ENCODE measurements at regions of chr2 and their contacts with region 1.

Region 1: DNA sequence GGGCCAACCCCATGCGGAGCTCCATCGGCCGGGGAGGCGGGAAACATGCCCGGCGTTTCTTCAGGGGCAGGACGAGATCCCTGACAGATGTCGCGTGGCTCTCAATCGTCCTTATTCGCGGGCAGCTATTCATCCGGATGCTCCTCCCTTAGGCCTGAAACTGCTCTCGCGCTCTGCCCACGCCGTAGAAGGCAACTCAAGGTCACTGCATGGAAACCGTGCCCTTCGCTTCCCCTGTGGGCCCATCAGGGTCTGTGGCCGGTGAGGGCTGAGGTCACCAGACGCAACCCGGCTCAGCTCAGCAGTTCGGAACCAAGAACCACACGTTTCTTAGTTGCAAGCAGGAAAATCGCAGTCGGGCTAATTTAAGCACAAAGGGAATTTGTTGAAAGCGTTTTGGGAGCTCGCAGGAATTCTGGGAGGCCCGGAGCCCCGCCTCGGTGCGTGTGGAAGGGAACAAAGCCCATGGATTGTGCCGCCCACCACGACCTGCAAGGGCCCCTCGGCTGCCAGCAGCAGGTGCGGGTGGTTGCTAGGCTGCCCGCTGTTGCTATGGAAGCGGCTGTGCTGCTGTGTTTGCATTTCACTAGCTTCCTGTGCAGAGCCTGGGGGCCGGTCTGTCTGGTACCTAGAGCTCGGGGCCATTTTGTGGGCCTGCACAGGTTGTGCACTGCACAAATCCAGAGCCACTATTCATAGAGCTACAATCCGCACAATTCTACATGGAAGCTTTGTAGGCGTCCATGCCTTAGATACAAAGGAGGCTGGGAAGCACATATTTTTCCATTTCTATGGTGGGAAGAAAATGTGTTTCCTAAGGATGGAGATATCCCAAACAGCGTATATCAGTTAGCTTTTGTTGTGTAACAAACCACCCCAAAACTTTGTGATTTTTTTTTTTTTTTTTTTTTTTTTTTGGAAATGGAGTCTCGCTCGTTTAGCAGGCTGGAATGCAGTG is 6.0 kb upstream of the ALLC start:
- DNase-seq: peak; percentile 49
- ATAC-seq: peak; percentile 70
- H3K4me3 Mint-ChIP-seq: peak overlapping the region; percentile 81
- H3K27ac Mint-ChIP-seq: peak overlapping the region; percentile 78
- H3K4me1 Mint-ChIP-seq: peaks cover 18% of the 10 kb centered on the region
- H3K27me3 Mint-ChIP-seq: peaks cover 3% of the 10 kb centered on the region
- CTCF ChIP-seq: no peak

Region 2: GRCh38 chr2:1886405-1886992 is 1765.5 kb before region 1 on chr2:
- CTCF ChIA-PET with region 1: interaction called, 3 read pairs
- POLR2A ChIA-PET with region 1: no interaction called
- intact Hi-C with region 1: loop called (anchors 1 kb)
- DNase-seq: no peak
- ATAC-seq: no peak
- H3K4me3 Mint-ChIP-seq: no peak overlapping the region
- H3K27ac Mint-ChIP-seq: no peak overlapping the region
- H3K4me1 Mint-ChIP-seq: peaks cover 2% of the 10 kb centered on the region
- H3K27me3 Mint-ChIP-seq: peaks cover 3% of the 10 kb centered on the region
- CTCF ChIP-seq: no peak

Region 3: DNA sequence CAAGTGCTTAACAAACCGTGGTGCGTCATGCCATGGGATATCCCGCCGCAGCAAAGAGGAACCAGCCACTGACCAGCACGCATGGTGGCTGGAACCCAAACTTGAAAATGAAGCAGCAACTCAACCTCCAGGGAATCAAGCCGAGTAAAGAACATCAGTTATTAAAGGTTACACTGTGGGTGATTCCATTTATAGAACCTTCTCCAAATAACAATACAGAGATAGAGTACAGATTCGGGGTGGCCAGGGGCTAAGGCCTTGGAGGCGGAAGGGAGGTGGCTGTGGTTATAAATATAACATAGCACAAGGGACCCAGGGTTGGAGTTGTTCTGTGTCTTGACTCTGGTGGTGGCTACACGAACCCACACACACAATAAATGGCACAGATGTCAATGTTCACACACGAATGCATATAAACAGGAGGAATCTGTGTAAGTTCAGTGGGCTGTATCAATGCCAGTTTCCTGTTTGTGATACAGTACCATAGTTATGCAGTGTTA is 397.5 kb before region 1 on chr2:
- CTCF ChIA-PET with region 1: no interaction called
- POLR2A ChIA-PET with region 1: no interaction called
- intact Hi-C with region 1: loop called (anchors 5 kb)
- DNase-seq: peak; percentile 41
- ATAC-seq: peak; percentile 80
- H3K4me3 Mint-ChIP-seq: peak overlapping the region; percentile 68
- H3K27ac Mint-ChIP-seq: peak overlapping the region; percentile 89
- H3K4me1 Mint-ChIP-seq: peaks cover 63% of the 10 kb centered on the region
- H3K27me3 Mint-ChIP-seq: no peaks in the 10 kb centered on the region
- CTCF ChIP-seq: no peak

Region 4: GRCh38 chr2:3379647-3380534 is 272.1 kb before region 1 on chr2 and contains the start of gene TRAPPC12:
- CTCF ChIA-PET with region 1: no interaction called
- POLR2A ChIA-PET with region 1: interaction called, 5 read pairs
- intact Hi-C with region 1: loop called (anchors 1 kb)
- DNase-seq: peak; percentile 94
- ATAC-seq: peak; percentile 76
- H3K4me3 Mint-ChIP-seq: peak within 1 kb of the TSS; percentile 96
- H3K27ac Mint-ChIP-seq: peak within 1 kb of the TSS; percentile 94
- H3K4me1 Mint-ChIP-seq: peaks cover 52% of the 10 kb centered on the region
- H3K27me3 Mint-ChIP-seq: no peaks in the 10 kb centered on the region
- CTCF ChIP-seq: no peak
- total RNA-seq, gene TRAPPC12: 95.4 and 104 TPM in 2 replicates

Region 5: DNA sequence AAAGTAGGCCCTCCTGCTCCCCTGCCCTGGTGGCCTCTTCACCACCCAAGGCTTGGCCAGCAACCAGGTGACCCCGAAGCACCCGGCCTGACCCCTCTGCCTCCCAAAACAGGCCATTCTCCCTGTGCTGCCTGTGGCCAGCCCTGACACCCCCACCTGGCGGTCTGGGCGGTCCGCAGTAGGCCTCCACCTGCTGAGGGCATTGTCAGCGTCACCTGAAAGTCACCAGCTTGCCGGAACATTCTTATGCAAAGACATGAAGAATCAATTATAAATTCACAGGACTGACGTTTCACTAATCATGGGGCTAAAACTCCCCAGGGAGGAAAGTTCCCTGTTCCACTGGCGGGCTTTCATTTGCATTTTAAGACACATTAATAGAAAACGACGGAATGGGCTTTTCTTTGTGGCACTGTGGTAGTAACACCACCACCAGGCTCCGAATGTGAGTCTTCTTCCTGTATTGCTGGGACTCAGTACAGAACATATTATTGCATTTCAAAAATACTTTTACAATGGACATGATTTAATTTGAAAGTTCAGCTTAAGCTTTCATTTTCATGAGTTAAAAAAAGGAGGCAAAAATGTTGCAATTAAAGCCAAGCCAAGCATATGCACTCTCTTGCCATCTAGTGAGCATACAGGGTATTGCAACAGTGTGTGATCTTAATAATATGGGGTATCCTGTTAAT is 190.0 kb before region 1 on chr2:
- CTCF ChIA-PET with region 1: no interaction called
- POLR2A ChIA-PET with region 1: no interaction called
- intact Hi-C with region 1: loop called (anchors 1 kb)
- DNase-seq: no peak
- ATAC-seq: peak; percentile 80
- H3K4me3 Mint-ChIP-seq: peak overlapping the region; percentile 70
- H3K27ac Mint-ChIP-seq: peak overlapping the region; percentile 90
- H3K4me1 Mint-ChIP-seq: peaks cover 13% of the 10 kb centered on the region
- H3K27me3 Mint-ChIP-seq: no peaks in the 10 kb centered on the region
- CTCF ChIP-seq: peak; percentile 93

Region 6: DNA sequence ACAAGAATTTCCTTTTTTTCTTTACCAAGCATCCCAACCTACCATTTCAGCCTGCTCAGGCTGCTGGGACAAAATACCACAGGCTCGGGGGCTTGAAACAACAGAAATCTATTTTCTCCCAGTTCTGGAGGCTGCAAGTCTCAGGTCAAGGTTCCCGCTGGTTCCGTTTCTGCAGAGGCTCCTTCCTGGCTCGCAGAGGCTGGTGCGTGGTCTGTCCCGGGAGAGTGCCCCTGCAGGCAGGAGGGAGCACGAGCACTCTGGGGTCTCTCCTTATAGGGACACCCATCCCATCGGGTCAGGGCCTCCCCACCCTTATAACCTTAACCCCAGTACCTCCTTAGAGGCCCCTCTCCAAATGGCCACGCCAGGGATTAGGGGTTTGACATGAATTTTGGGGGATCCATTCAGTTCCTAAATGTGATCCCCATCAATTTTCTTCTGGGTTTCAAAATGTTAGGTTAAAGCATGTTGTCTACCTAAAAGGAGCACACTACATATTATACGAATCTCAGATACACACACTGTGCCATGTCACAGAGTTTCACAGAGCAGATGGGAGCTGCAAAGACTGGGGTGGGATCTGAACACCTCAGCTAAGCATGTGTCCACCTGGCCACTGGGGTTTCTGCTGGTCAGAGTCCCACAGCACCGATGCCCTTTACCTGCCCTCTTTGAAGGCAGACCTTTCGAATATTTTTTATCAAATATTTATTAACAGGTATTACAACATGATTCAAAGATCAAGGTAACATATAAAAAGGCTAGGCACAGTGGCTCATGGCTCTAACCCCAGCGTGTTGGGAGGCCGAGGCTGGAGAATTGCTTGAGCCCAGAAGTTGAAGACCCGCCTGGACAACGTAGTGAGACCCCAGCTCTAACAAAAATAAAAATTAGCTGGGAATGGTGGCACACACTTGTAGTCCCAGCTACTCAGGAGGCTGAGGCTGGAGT is 115.0 kb before region 1 on chr2:
- CTCF ChIA-PET with region 1: no interaction called
- POLR2A ChIA-PET with region 1: no interaction called
- intact Hi-C with region 1: loop called (anchors 1 kb)
- DNase-seq: no peak
- ATAC-seq: no peak
- H3K4me3 Mint-ChIP-seq: peak overlapping the region; percentile 70
- H3K27ac Mint-ChIP-seq: peak overlapping the region; percentile 46
- H3K4me1 Mint-ChIP-seq: peaks cover 11% of the 10 kb centered on the region
- H3K27me3 Mint-ChIP-seq: no peaks in the 10 kb centered on the region
- CTCF ChIP-seq: no peak

Region 7: DNA sequence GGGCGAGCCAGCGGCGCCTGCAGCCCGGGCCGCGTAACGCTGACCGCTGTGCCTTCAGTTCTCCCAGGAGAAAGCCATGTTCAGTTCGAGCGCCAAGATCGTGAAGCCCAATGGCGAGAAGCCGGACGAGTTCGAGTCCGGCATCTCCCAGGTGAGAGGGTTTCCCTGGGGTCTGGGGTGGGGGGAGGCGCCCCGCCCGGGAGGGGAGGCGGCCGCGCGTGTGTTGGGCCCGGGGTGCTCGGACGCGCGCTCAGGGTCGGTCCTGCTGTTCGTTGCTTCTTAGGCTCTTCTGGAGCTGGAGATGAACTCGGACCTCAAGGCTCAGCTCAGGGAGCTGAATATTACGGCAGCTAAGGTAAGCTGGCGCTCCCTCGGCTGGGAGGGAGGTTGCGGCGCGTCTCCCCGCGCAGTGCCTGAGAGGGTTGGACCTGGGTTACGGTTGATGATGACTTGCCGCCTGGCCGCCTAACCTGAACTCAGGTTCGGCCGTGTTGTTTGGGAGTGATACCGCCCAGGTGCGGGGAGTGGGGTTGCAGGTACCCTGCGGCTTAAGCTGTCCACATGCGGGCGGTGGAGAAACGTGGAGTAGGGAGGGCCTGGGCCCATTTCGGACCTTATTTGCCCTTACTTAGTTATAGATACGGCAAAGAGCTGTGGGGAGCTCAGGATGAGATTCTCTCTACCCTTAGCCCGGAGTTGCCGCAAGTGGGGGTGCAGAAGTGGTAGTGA is 76.3 kb before region 1 on chr2:
- CTCF ChIA-PET with region 1: no interaction called
- POLR2A ChIA-PET with region 1: interaction called, 3 read pairs
- intact Hi-C with region 1: loop called (anchors 1 kb)
- DNase-seq: no peak
- ATAC-seq: peak; percentile 43
- H3K4me3 Mint-ChIP-seq: peak overlapping the region; percentile 91
- H3K27ac Mint-ChIP-seq: peak overlapping the region; percentile 91
- H3K4me1 Mint-ChIP-seq: peaks cover 45% of the 10 kb centered on the region
- H3K27me3 Mint-ChIP-seq: no peaks in the 10 kb centered on the region
- CTCF ChIP-seq: no peak

Region 8: GRCh38 chr2:4140281-4140970 is 488.5 kb after region 1 on chr2:
- CTCF ChIA-PET with region 1: no interaction called
- POLR2A ChIA-PET with region 1: no interaction called
- intact Hi-C with region 1: no loop called
- DNase-seq: no peak
- ATAC-seq: no peak
- H3K4me3 Mint-ChIP-seq: no peak overlapping the region
- H3K27ac Mint-ChIP-seq: no peak overlapping the region
- H3K4me1 Mint-ChIP-seq: no peaks in the 10 kb centered on the region
- H3K27me3 Mint-ChIP-seq: no peaks in the 10 kb centered on the region
- CTCF ChIP-seq: no peak

Measured in activated B cell treated with CpG ODN at 0.5 μM for 24 hours (primary cell).